Ascending aorta (tissue), 2 donors: ENCODE measurements at regions of chr2 and their contacts with region 1.

Region 1: GRCh38 chr2:88055371-88056128 is at the start of gene KRCC1:
- DNase-seq: peak; percentile 83 to 97
- H3K4me3 ChIP-seq: peak within 1 kb of the TSS; percentile 79 to 89
- H3K27ac ChIP-seq: peak within 1 kb of the TSS; percentile 97
- H3K4me1 ChIP-seq: peaks cover 0 to 15% of the 10 kb centered on the region in 2 donors
- H3K27me3 ChIP-seq: no peaks in the 10 kb centered on the region
- CTCF ChIP-seq: no peak
- total RNA-seq, gene KRCC1: 3.1 TPM

Region 2: GRCh38 chr2:86592547-86593230 is 1462.9 kb before region 1 on chr2:
- intact Hi-C with region 1: no loop called
- DNase-seq: no peak
- H3K4me3 ChIP-seq: no peak overlapping the region
- H3K27ac ChIP-seq: no peak overlapping the region
- H3K4me1 ChIP-seq: peaks cover 0 to 5% of the 10 kb centered on the region in 2 donors
- H3K27me3 ChIP-seq: no peaks in the 10 kb centered on the region
- CTCF ChIP-seq: no peak

Region 3: GRCh38 chr2:88016086-88016959 is 39.2 kb before region 1 on chr2 and contains the start of gene RNU2-63P:
- intact Hi-C with region 1: loop called (anchors 1 kb)
- DNase-seq: peak in 1 of 2 donors; percentile 84
- H3K4me3 ChIP-seq: peak within 1 kb of the TSS; percentile 59 to 68
- H3K27ac ChIP-seq: peak within 1 kb of the TSS; percentile 2 to 46
- H3K4me1 ChIP-seq: no peaks in the 10 kb centered on the region
- H3K27me3 ChIP-seq: no peaks in the 10 kb centered on the region
- CTCF ChIP-seq: no peak
- total RNA-seq, gene RNU2-63P: not detected

Region 4: DNA sequence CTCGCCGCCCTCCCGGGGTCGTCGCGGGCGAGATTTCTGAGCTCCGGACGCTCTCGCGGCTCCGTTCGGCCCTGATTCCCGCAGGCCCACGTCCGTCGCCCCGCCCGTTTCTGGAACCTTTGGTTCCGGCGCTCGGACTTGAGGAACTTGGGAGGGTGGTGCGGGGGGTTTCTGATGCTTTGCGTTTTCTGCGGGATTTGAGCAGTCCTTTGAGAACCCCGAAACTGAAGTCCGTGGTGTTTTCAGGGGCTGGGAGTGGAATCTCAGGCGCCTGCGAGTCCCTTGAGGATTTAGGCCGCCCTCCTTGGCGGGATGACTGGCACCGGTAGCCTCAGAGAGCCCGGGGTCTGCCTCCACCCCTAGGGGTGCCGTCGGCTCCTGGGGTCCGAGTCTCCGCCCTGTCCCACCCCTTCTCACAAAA is 114.9 kb after region 1 on chr2:
- intact Hi-C with region 1: loop called (anchors 2 kb)
- DNase-seq: no peak
- H3K4me3 ChIP-seq: peak overlapping the region; percentile 70 to 71
- H3K27ac ChIP-seq: peak overlapping the region; percentile 65 to 71
- H3K4me1 ChIP-seq: peaks cover 0 to 3% of the 10 kb centered on the region in 2 donors
- H3K27me3 ChIP-seq: no peaks in the 10 kb centered on the region
- CTCF ChIP-seq: no peak